Psoas muscle (tissue), 8 donors: ENCODE measurements at regions of chr16 and their contacts with region 1.

Region 1: GRCh38 chr16:25224731-25225319 is 8.1 kb downstream of the AQP8 start:
- DNase-seq: no peak
- ATAC-seq: no peak
- H3K4me3 ChIP-seq: no peak overlapping the region
- H3K27ac ChIP-seq: no peak overlapping the region
- H3K4me1 ChIP-seq: no peaks in the 10 kb centered on the region
- H3K27me3 ChIP-seq: no peaks in the 10 kb centered on the region
- CTCF ChIP-seq: no peak

Region 2: GRCh38 chr16:24516900-24517669 is 707.7 kb before region 1 on chr16:
- intact Hi-C with region 1: loop called in 1 of 2 experiments (anchors 10 kb)
- DNase-seq: peak; percentile 68 to 80
- ATAC-seq: peak; percentile 83 to 97 (median 89)
- H3K4me3 ChIP-seq: peak overlapping the region; percentile 46
- H3K27ac ChIP-seq: no peak overlapping the region
- H3K4me1 ChIP-seq: no peaks in the 10 kb centered on the region
- H3K27me3 ChIP-seq: no peaks in the 10 kb centered on the region
- CTCF ChIP-seq: peak; percentile 87

Region 3: GRCh38 chr16:25126820-25127232 is 98.0 kb before region 1 on chr16:
- intact Hi-C with region 1: loop called in 1 of 2 experiments (anchors 5 kb)
- DNase-seq: no peak
- ATAC-seq: peak in 2 of 4 donors; percentile 19 to 32
- H3K4me3 ChIP-seq: no peak overlapping the region
- H3K27ac ChIP-seq: no peak overlapping the region
- H3K4me1 ChIP-seq: peaks cover 2% of the 10 kb centered on the region
- H3K27me3 ChIP-seq: no peaks in the 10 kb centered on the region
- CTCF ChIP-seq: peak; percentile 28

Region 4: DNA sequence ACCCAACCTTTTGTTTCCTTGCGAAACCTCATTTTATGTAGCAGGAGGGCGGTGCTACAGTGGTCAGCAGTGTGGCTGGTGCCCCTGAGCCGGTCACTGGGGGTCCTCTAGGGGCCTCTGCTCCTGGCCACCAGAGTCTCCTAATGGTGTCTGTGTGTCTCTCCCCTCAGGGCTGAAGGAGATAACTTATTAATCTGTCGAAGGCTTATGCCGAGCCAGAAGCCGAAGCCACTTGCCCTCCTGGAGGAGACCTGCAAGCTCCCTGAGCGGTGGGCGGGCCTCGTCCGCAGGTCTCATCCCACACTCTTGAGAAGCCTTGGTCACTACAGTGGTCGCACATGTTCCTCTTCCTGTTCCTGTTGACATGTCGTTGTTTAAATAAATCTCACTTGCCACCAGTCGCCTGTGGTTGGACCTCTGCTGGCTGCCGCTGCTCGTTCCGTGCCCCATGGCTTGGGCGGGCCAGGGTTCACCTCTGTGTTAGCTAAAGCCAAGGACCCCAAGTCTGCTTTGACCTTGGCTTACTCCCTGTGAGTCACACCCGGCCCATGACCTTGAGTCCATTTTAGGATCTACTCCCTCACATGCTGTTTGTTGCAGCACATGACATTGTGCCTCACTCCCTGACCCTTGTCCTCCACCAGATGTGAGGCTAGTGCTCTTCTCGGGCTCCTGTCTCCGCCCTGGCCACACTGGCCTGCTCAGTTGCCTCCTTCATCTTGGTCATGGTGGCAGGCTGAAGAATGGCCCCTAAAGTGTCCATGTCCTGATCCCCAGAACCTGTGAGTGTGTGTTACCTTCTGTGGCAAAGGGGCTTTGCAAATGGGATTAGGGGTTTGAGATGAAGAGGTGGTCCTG is 46.8 kb before region 1 on chr16:
- intact Hi-C with region 1: no loop called
- DNase-seq: no peak
- ATAC-seq: no peak
- H3K4me3 ChIP-seq: no peak overlapping the region
- H3K27ac ChIP-seq: no peak overlapping the region
- H3K4me1 ChIP-seq: no peaks in the 10 kb centered on the region
- H3K27me3 ChIP-seq: no peaks in the 10 kb centered on the region
- CTCF ChIP-seq: no peak

Region 5: GRCh38 chr16:25291580-25291979 is 66.8 kb after region 1 on chr16:
- intact Hi-C with region 1: no loop called
- DNase-seq: no peak
- ATAC-seq: no peak
- H3K4me3 ChIP-seq: no peak overlapping the region
- H3K27ac ChIP-seq: no peak overlapping the region
- H3K4me1 ChIP-seq: no peaks in the 10 kb centered on the region
- H3K27me3 ChIP-seq: no peaks in the 10 kb centered on the region
- CTCF ChIP-seq: no peak

Region 6: DNA sequence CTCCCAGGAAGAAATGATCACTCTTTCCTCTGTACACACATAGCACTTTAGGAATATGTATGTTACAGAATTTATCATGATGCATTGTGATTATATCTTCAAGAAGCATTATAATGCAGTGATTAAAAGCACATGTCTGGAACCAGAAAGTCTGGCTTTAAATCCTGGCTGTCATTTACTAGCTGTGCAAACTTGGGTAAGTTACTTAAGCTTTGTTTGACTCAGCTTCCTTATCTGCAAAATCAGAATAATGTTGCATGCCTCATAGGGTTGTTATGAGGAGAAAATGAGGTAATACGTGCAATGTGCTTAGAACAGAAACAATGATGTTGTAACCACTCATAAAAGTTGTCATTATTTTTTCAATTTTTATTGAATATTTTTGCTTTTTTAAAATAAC is 189.2 kb after region 1 on chr16:
- intact Hi-C with region 1: no loop called
- DNase-seq: no peak
- ATAC-seq: no peak
- H3K4me3 ChIP-seq: no peak overlapping the region
- H3K27ac ChIP-seq: no peak overlapping the region
- H3K4me1 ChIP-seq: no peaks in the 10 kb centered on the region
- H3K27me3 ChIP-seq: no peaks in the 10 kb centered on the region
- CTCF ChIP-seq: no peak